A673 (cell line): ENCODE measurements at regions of chr16 and their contacts with region 1.

Region 1: GRCh38 chr16:66947302-66948065 is 12.2 kb downstream of the CES2 start:
- DNase-seq: peak; percentile 92
- H3K4me3 ChIP-seq: peak overlapping the region; percentile 52
- H3K27ac ChIP-seq: no peak overlapping the region
- H3K4me1 ChIP-seq: no peaks in the 10 kb centered on the region
- H3K27me3 ChIP-seq: no peaks in the 10 kb centered on the region
- CTCF ChIP-seq: peak; percentile 94

Region 2: DNA sequence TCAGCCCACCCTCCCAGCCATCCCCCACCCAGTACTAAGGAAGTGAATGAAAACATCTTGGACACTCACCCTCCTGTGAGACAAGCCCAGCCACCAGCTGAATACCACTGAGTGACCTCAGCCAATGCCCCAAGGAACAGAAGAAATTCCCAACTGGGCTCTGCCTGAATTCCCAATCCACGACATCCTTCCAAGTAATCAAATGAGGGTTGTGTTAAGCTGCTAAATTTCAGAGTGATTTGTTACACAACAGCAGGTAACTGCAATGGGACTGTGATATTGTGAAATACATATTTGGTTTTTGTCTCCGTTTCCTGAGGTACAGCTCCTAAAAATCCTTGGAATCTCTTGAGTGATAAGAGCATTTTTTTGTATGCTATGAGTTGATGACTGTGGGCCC is 1246.9 kb before region 1 on chr16:
- CTCF ChIA-PET with region 1: interaction called, 13 read pairs
- POLR2A ChIA-PET with region 1: no interaction called
- intact Hi-C with region 1: no loop called
- DNase-seq: no peak
- H3K4me3 ChIP-seq: no peak overlapping the region
- H3K27ac ChIP-seq: no peak overlapping the region
- H3K4me1 ChIP-seq: peaks cover 15% of the 10 kb centered on the region
- H3K27me3 ChIP-seq: no peaks in the 10 kb centered on the region
- CTCF ChIP-seq: no peak

Region 3: GRCh38 chr16:66774981-66775380 is 172.5 kb before region 1 on chr16:
- CTCF ChIA-PET with region 1: no interaction called
- POLR2A ChIA-PET with region 1: no interaction called
- intact Hi-C with region 1: no loop called
- DNase-seq: no peak
- H3K4me3 ChIP-seq: no peak overlapping the region
- H3K27ac ChIP-seq: no peak overlapping the region
- H3K4me1 ChIP-seq: no peaks in the 10 kb centered on the region
- H3K27me3 ChIP-seq: no peaks in the 10 kb centered on the region
- CTCF ChIP-seq: no peak

Region 4: GRCh38 chr16:67055712-67056487 is 108.4 kb after region 1 on chr16:
- CTCF ChIA-PET with region 1: no interaction called
- POLR2A ChIA-PET with region 1: interaction called, 13 read pairs
- intact Hi-C with region 1: no loop called
- DNase-seq: peak; percentile 47
- H3K4me3 ChIP-seq: no peak overlapping the region
- H3K27ac ChIP-seq: no peak overlapping the region
- H3K4me1 ChIP-seq: no peaks in the 10 kb centered on the region
- H3K27me3 ChIP-seq: no peaks in the 10 kb centered on the region
- CTCF ChIP-seq: no peak